B cell (primary cell): ENCODE measurements at regions of chr15 and their contacts with region 1.

Region 1: DNA sequence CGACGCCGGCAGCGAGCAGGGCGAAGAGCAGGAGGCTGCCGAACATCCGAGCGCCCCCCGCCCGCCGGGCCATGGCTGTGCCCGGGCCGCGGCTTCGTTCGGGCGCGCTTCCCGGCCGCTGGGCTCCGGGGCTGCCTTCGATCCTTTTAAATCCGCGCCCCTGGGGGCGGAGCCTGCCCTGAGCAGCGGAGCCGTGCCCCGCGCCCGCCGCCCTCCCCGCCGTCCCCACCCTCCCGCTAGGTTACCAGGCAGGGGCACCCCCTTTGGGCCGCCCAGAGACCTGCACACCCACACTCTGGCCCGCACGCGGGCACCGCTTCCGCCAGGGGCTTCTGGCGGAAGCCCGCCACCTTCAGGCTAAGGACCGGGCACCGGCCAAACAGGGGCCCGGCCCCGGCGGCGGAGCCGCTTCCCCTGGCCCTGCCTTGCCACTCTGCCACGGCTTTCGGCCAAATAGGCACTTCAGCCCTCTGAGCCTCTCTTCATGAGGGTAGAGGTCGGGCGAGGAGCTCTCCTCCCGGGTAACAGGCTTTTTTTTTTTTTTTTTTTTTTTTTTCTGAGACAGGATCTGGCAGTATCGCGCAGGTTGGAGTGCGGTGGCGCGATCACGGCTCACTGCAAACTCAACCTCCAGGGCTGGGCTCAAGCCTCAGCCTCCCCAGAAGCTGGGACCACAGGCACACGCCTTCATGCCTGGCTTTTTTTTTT is at the start of gene NMB:
- DNase-seq: peak; percentile 93
- ATAC-seq: peak; percentile 76
- H3K4me3 ChIP-seq: peak within 1 kb of the TSS; percentile 38 to 86 (median 63)
- H3K4me3 Mint-ChIP-seq: peak within 1 kb of the TSS; percentile 83
- H3K27ac ChIP-seq: peak within 1 kb of the TSS; percentile 63 to 69
- H3K27ac Mint-ChIP-seq: peak within 1 kb of the TSS; percentile 87
- H3K4me1 ChIP-seq: peaks cover 22 to 30% of the 10 kb centered on the region in 2 donors
- H3K4me1 Mint-ChIP-seq: peaks cover 32% of the 10 kb centered on the region
- H3K27me3 ChIP-seq: no peaks in the 10 kb centered on the region
- H3K27me3 Mint-ChIP-seq: no peaks in the 10 kb centered on the region
- CTCF ChIP-seq: peak; percentile 78
- total RNA-seq, gene NMB: 3.0 and 5.0 TPM in 2 replicates

Region 2: GRCh38 chr15:84600851-84601838 is 57.1 kb before region 1 on chr15 and contains the start of gene ZSCAN2:
- CTCF ChIA-PET with region 1: interaction called, 17 read pairs
- POLR2A ChIA-PET with region 1: interaction called, 4 read pairs
- intact Hi-C with region 1: loop called (anchors 1 kb)
- DNase-seq: peak; percentile 93
- ATAC-seq: peak; percentile 94
- H3K4me3 ChIP-seq: peak within 1 kb of the TSS; percentile 78 to 95 (median 86)
- H3K4me3 Mint-ChIP-seq: peak within 1 kb of the TSS; percentile 99
- H3K27ac ChIP-seq: peak within 1 kb of the TSS; percentile 32 to 47
- H3K27ac Mint-ChIP-seq: peak within 1 kb of the TSS; percentile 96
- H3K4me1 ChIP-seq: peaks cover 29 to 52% of the 10 kb centered on the region in 2 donors
- H3K4me1 Mint-ChIP-seq: peaks cover 64% of the 10 kb centered on the region
- H3K27me3 ChIP-seq: no peaks in the 10 kb centered on the region
- H3K27me3 Mint-ChIP-seq: no peaks in the 10 kb centered on the region
- CTCF ChIP-seq: no peak
- total RNA-seq, gene ZSCAN2: 16.2 and 18.6 TPM in 2 replicates

Region 3: DNA sequence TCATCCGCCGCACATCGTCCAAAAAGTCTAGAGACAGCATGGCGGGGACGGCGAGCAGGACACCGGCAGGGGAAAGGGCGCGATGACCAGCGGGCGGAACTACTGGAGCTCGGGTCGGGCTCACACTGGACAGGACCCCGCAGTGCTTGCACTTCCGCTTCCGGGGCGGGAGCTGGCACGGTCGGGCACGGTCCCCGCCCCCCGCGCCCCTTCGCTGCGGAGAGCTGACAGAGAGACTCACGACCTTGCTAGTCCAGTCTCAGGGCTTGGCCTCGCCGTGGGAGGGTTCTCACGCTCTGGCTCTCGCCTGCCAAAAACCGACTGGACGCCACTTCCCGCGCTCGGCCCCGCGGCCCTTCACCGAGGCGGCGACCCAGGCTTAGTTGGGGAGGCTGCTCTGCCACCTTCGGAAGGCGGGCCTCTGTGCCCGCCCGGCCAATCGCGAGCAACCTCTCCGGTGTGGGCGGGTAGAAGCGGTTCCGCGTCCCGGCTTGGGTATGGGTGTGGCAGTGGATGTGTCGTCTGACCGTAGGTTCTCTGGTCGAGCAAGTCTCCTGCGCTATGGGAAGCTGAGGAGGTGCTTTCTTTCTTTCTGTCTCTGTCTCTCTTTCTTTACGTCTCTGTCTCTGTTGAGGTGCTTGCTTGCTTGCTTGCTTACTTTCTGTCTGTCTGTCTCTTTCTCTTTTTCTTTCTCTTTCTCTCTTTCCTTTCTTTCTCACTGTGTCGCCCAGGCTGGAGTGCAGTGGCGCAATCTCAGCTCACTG is 58.0 kb after region 1 on chr15 and contains the start of gene SEC11A:
- CTCF ChIA-PET with region 1: interaction called, 20 read pairs
- POLR2A ChIA-PET with region 1: interaction called, 3 read pairs
- intact Hi-C with region 1: loop called (anchors 1 kb)
- DNase-seq: peak; percentile 96
- ATAC-seq: peak; percentile 96
- H3K4me3 ChIP-seq: peak within 1 kb of the TSS; percentile 70 to 99 (median 87)
- H3K4me3 Mint-ChIP-seq: peak within 1 kb of the TSS; percentile 93
- H3K27ac ChIP-seq: peak within 1 kb of the TSS; percentile 82 to 92
- H3K27ac Mint-ChIP-seq: peak within 1 kb of the TSS; percentile 94
- H3K4me1 ChIP-seq: peaks cover 28 to 39% of the 10 kb centered on the region in 2 donors
- H3K4me1 Mint-ChIP-seq: peaks cover 46% of the 10 kb centered on the region
- H3K27me3 ChIP-seq: no peaks in the 10 kb centered on the region
- H3K27me3 Mint-ChIP-seq: no peaks in the 10 kb centered on the region
- CTCF ChIP-seq: no peak
- total RNA-seq, gene SEC11A: 69.8 and 78.0 TPM in 2 replicates

Region 4: GRCh38 chr15:84748274-84749110 is 90.3 kb after region 1 on chr15 and contains the start of gene ZNF592:
- CTCF ChIA-PET with region 1: interaction called, 9 read pairs
- POLR2A ChIA-PET with region 1: interaction called, 18 read pairs
- intact Hi-C with region 1: loop called (anchors 1 kb)
- DNase-seq: peak; percentile 90
- ATAC-seq: peak; percentile 66
- H3K4me3 ChIP-seq: peak within 1 kb of the TSS; percentile 69 to 93 (median 79)
- H3K4me3 Mint-ChIP-seq: peak within 1 kb of the TSS; percentile 100
- H3K27ac ChIP-seq: peak within 1 kb of the TSS; percentile 86 to 97
- H3K27ac Mint-ChIP-seq: peak within 1 kb of the TSS; percentile 98
- H3K4me1 ChIP-seq: peaks cover 52 to 65% of the 10 kb centered on the region in 2 donors
- H3K4me1 Mint-ChIP-seq: peaks cover 66% of the 10 kb centered on the region
- H3K27me3 ChIP-seq: no peaks in the 10 kb centered on the region
- H3K27me3 Mint-ChIP-seq: no peaks in the 10 kb centered on the region
- CTCF ChIP-seq: no peak
- total RNA-seq, gene ZNF592: 59.5 and 64.4 TPM in 2 replicates

Region 5: DNA sequence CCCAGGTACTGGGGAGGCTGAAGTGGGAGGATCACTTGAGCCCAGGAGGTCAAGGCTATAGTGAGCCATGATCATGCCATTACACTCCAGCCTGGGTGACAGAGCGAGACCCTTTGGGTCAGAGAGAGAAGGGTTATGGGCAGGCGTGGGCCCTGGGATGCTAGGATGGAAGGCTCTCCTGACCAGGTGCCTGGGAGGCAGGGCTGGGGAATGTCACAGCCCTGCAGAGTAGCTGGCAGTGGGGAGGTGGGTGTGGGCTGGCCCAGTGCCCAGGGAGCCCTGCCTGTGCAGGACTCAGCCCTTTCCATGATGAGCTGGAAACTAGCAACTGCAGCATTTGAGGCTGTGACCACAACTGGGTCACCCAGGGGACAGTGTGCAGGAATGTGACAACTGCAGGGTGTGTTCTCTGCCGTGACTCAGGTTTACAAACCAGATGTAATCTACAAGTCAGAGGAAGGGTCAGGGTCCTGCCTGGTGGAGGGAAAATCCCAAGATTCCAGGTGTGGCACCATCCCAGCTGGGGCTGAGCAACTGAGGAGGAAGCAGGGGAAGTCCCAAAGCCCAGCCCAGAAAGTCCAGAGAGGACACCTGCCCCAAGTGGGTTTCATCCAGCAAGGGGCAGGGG is 271.6 kb after region 1 on chr15:
- CTCF ChIA-PET with region 1: interaction called, 5 read pairs
- POLR2A ChIA-PET with region 1: no interaction called
- intact Hi-C with region 1: loop called (anchors 1 kb)
- DNase-seq: no peak
- ATAC-seq: no peak
- H3K4me3 ChIP-seq: no peak overlapping the region
- H3K4me3 Mint-ChIP-seq: no peak overlapping the region
- H3K27ac ChIP-seq: no peak overlapping the region
- H3K27ac Mint-ChIP-seq: no peak overlapping the region
- H3K4me1 ChIP-seq: peaks cover 2 to 5% of the 10 kb centered on the region in 2 donors
- H3K4me1 Mint-ChIP-seq: peaks cover 5% of the 10 kb centered on the region
- H3K27me3 ChIP-seq: no peaks in the 10 kb centered on the region
- H3K27me3 Mint-ChIP-seq: no peaks in the 10 kb centered on the region
- CTCF ChIP-seq: no peak

Region 6: GRCh38 chr15:85289677-85290365 is 631.6 kb after region 1 on chr15:
- CTCF ChIA-PET with region 1: no interaction called
- POLR2A ChIA-PET with region 1: interaction called, 10 read pairs
- intact Hi-C with region 1: no loop called
- DNase-seq: peak; percentile 56
- ATAC-seq: peak; percentile 36
- H3K4me3 ChIP-seq: no peak overlapping the region
- H3K4me3 Mint-ChIP-seq: no peak overlapping the region
- H3K27ac ChIP-seq: no peak overlapping the region
- H3K27ac Mint-ChIP-seq: no peak overlapping the region
- H3K4me1 ChIP-seq: peaks cover 0 to under 1% of the 10 kb centered on the region in 2 donors
- H3K4me1 Mint-ChIP-seq: peaks cover 9% of the 10 kb centered on the region
- H3K27me3 ChIP-seq: peaks cover 0 to 4% (median 0%) of the 10 kb centered on the region in 4 experiments
- H3K27me3 Mint-ChIP-seq: peaks cover 4% of the 10 kb centered on the region
- CTCF ChIP-seq: peak; percentile 48